ENCODE measurements at regions of chr6 and their contacts with region 1.

Region 1: GRCh38 chr6:41901882-41902519 is 6.8 kb upstream of the USP49 start:
- DNase-seq: no peak
- H3K4me3 ChIP-seq: no peak overlapping the region
- H3K27me3 ChIP-seq: no peaks in the 10 kb centered on the region
- CTCF ChIP-seq: 0 out of 2 replicates have a peak, but pooled peaks have one; percentile 18

Region 2: GRCh38 chr6:41887331-41887751 is 14.7 kb before region 1 on chr6:
- CTCF ChIA-PET with region 1: no interaction called
- POLR2A ChIA-PET with region 1: no interaction called
- DNase-seq: no peak
- H3K4me3 ChIP-seq: no peak overlapping the region
- H3K27me3 ChIP-seq: no peaks in the 10 kb centered on the region
- CTCF ChIP-seq: no peak

Region 3: GRCh38 chr6:41929924-41930323 is 27.9 kb after region 1 on chr6:
- CTCF ChIA-PET with region 1: interaction called, 3 read pairs
- POLR2A ChIA-PET with region 1: interaction called, 14 read pairs
- DNase-seq: no peak
- H3K4me3 ChIP-seq: no peak overlapping the region
- H3K27me3 ChIP-seq: no peaks in the 10 kb centered on the region
- CTCF ChIP-seq: no peak